Breast epithelium (tissue), 4 donors: ENCODE measurements at regions of chr6 and their contacts with region 1.

Region 1: DNA sequence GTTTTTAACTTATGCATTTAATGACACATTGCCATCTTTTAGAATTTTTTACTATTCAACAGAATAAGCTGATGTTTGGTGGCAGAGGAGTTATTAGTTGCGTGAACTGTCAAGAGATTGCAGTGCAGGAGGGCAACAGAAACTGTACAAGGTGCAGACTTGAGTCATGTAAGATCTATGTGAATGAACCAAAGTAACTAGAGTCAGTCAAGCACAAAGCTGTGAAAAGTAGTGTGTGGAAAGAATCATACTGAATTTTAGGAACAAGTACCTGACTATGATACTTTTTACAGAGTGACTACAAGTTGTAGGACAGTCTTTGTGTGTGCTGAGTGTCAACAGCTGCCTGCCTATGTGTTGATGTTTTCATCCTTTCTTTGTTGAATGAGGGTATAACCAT is 2.7 kb upstream of the C6orf163 start:
- DNase-seq: no peak
- H3K4me3 ChIP-seq: no peak overlapping the region
- H3K27ac ChIP-seq: no peak overlapping the region
- H3K4me1 ChIP-seq: no peaks in the 10 kb centered on the region
- H3K27me3 ChIP-seq: no peaks in the 10 kb centered on the region
- CTCF ChIP-seq: no peak
- POLR2A ChIP-seq: no peak

Region 2: DNA sequence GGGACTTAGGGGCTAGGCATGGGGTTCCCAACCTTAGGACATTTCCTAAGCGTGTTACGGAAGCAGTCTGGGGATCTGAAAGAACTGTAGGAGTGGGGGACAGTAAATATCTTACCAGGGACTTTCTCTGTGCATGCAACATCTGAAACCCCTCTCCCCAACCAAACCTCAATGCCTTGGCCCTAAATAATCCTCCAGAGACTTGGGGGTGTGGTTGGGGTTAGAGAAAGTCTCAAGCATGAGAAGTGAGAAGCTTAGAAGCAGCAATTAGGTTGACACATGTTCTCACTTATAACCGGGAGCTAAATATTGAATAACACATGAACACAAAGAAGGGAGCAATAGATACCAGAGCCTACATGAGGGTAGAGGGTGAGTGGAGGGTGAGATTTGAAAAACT is 329.9 kb before region 1 on chr6:
- intact Hi-C with region 1: no loop called
- DNase-seq: no peak
- H3K4me3 ChIP-seq: no peak overlapping the region
- H3K27ac ChIP-seq: no peak overlapping the region
- H3K4me1 ChIP-seq: no peaks in the 10 kb centered on the region
- H3K27me3 ChIP-seq: peaks cover 0 to under 1% of the 10 kb centered on the region in 2 donors
- CTCF ChIP-seq: no peak
- POLR2A ChIP-seq: no peak

Region 3: GRCh38 chr6:87366072-87366827 is 24.4 kb after region 1 on chr6:
- intact Hi-C with region 1: loop called (anchors 2 kb)
- DNase-seq: no peak
- H3K4me3 ChIP-seq: no peak overlapping the region
- H3K27ac ChIP-seq: no peak overlapping the region
- H3K4me1 ChIP-seq: no peaks in the 10 kb centered on the region
- H3K27me3 ChIP-seq: no peaks in the 10 kb centered on the region
- CTCF ChIP-seq: no peak
- POLR2A ChIP-seq: no peak